Spleen (tissue), 13 donors: ENCODE measurements at regions of chr2 and their contacts with region 1.

Region 1: GRCh38 chr2:38734299-38735058 is 16.7 kb downstream of the SRSF7 start:
- DNase-seq: no peak
- H3K4me3 ChIP-seq: no peak overlapping the region
- H3K27ac ChIP-seq: no peak overlapping the region
- H3K4me1 ChIP-seq: peaks cover 3 to 50% (median 24%) of the 10 kb centered on the region in 6 donors
- H3K27me3 ChIP-seq: no peaks in the 10 kb centered on the region
- CTCF ChIP-seq: no peak
- POLR2A ChIP-seq: no peak

Region 2: GRCh38 chr2:38323623-38324022 is 410.9 kb before region 1 on chr2:
- intact Hi-C with region 1: loop called (anchors 10 kb)
- DNase-seq: no peak
- H3K4me3 ChIP-seq: no peak overlapping the region
- H3K27ac ChIP-seq: no peak overlapping the region
- H3K4me1 ChIP-seq: peaks cover 0 to 17% (median 7%) of the 10 kb centered on the region in 6 donors
- H3K27me3 ChIP-seq: no peaks in the 10 kb centered on the region
- CTCF ChIP-seq: no peak
- POLR2A ChIP-seq: no peak

Region 3: DNA sequence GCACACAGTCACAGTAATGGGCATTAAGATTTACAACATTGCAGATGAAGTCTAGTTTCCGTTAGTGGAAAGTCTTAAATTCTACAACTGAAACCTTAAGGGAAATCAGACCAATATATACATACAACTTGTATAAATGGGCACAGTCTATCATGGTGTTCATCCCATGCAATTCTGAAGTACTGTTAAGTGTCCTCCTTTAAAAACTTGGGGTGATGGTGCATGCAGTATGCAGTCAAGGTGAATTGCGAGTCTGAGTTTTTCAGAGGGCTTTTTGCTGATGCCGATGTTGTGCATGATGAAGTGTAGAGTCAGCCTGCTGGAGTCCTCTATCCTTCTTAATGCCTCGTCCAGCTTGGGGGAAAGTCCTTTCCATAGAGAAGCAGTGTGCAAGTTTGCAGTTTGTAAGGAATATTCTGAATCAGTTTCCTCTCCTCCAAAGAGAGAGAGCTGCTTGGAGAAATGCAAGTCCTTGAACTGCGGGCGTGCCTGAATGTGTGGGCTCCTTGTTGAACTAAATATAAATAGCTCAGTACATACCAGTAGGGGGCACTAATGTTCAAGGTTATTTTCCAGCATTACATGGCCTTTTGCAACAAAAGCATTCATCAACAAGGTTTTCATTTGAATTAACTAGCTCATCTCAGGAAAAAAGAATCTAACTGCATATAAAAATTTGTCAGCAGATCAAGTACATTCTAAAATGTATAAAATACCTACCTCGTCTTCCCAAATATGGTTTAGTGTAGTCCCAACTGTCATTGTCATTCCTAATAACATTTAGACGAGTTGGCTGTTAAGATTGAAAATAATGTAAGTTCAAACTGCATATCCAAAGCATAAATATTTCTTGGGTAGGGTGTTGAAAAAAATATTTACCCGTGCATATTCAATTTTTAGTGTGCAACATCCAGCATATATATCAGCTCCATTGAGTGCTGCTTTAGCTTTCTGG is 153.0 kb before region 1 on chr2:
- intact Hi-C with region 1: loop called (anchors 5 kb)
- DNase-seq: no peak
- H3K4me3 ChIP-seq: no peak overlapping the region
- H3K27ac ChIP-seq: no peak overlapping the region
- H3K4me1 ChIP-seq: peaks cover 0 to 39% (median 9%) of the 10 kb centered on the region in 6 donors
- H3K27me3 ChIP-seq: no peaks in the 10 kb centered on the region
- CTCF ChIP-seq: peak; percentile 43 to 74 (median 67)
- POLR2A ChIP-seq: no peak